H1 (cell line): ENCODE measurements at regions of chr9 and their contacts with region 1.

Region 1: DNA sequence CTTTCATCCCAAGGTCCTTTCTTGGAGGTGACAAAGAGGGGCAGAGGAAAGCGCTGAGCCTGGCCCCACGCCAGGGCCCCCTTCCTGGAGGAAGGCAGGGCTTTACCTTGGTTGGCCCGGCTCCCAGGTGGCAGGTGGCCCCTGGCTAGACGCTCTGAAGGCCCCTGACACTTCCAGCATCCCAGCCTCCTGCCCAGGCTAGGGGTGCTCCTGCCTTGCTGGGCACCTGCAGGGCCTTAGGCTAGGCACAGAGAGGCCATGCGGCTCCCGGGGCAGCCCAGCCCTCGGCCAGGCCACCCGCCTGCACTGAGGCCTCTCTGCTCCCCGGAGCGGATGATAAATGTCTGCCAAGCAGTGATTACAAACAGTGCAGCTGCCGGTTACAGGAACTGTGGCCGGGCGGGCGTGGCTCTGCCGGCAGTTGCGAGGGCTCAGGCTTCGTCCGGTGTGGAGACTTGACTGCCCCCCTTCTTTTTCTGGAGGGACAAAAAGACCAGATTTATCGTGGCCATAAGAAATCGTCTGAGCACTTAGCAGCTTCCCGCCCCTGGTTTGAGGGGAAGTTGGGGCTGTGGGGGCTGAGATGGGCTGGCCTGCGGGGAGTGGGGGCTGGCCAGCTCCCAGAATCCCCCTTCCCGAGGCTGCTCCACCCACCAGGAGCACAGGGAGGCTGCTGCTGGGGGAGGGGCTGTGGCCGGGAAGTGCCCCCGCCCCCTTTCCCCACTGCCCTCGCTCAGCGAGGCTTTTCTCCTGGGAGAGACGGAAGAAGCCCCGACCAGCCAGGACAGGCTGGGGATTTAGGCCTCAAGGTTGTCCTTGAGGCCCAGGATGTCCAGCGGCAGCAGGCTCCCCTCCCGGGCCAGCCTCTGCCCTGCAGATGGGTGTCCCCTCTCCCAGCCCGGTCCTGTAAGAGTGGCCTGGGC is 31.6 kb upstream of the UBAC1 start:
- DNase-seq: peak in 1 of 2 experiments; percentile 81
- H3K4me3 ChIP-seq: peak overlapping the region in 2 of 4 experiments; percentile 32 to 52; a peak in 4 of 8 replicates
- H3K27ac ChIP-seq: no peak overlapping the region
- H3K4me1 ChIP-seq: peaks cover 9 to 34% (median 27%) of the 10 kb centered on the region in 4 experiments
- H3K27me3 ChIP-seq: no peaks in the 10 kb centered on the region
- CTCF ChIP-seq: no peak
- EP300 ChIP-seq: no peak
- POLR2A ChIP-seq: no peak
- RAD21 ChIP-seq: no peak

Region 2: GRCh38 chr9:135770203-135770535 is 222.6 kb before region 1 on chr9:
- CTCF ChIA-PET with region 1: no interaction called
- POLR2A ChIA-PET with region 1: no interaction called
- DNase-seq: no peak
- H3K4me3 ChIP-seq: no peak overlapping the region
- H3K27ac ChIP-seq: no peak overlapping the region
- H3K4me1 ChIP-seq: no peaks in the 10 kb centered on the region
- H3K27me3 ChIP-seq: no peaks in the 10 kb centered on the region
- CTCF ChIP-seq: no peak
- EP300 ChIP-seq: no peak
- POLR2A ChIP-seq: no peak
- RAD21 ChIP-seq: no peak

Region 3: DNA sequence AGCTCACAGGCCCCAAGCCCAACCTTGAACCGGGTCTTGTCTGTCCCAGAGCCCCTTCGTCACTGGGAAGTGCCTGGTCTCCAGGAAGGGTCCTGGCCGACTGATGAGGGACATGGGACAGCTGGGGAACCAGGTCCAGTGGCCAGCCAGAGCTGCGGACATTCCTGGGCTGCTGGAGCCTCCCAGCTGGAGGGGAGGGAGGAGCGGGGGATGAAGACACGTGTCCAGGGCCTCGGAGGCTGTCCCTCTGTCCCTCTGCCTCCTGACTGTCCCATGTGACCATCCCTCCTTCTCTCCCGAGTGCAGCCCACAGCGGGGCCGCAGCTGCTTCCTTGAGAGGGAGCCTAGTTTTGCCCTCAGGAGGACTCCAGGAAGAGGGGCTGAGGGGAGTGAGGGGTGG is 10.1 kb after region 1 on chr9:
- CTCF ChIA-PET with region 1: interaction called, 3 read pairs
- POLR2A ChIA-PET with region 1: interaction called, 11 read pairs
- DNase-seq: no peak
- H3K4me3 ChIP-seq: no peak overlapping the region
- H3K27ac ChIP-seq: no peak overlapping the region
- H3K4me1 ChIP-seq: peaks cover 0 to 38% (median 28%) of the 10 kb centered on the region in 4 experiments; a peak in 6 of 7 replicates
- H3K27me3 ChIP-seq: no peaks in the 10 kb centered on the region
- CTCF ChIP-seq: no peak
- EP300 ChIP-seq: no peak
- POLR2A ChIP-seq: no peak
- RAD21 ChIP-seq: no peak